Natural killer cell (primary cell): ENCODE measurements at regions of chr19 and their contacts with region 1.

Region 1: GRCh38 chr19:8444645-8445487 is at the start of gene HNRNPM:
- DNase-seq: peak; percentile 99 to 100
- ATAC-seq: peak; percentile 91 to 99 (median 95)
- H3K4me3 ChIP-seq: peak within 1 kb of the TSS; percentile 99
- H3K4me3 Mint-ChIP-seq: peak within 1 kb of the TSS; percentile 97
- H3K27ac ChIP-seq: peak within 1 kb of the TSS; percentile 98
- H3K27ac Mint-ChIP-seq: peak within 1 kb of the TSS; percentile 94 to 100
- H3K4me1 ChIP-seq: peaks cover 36% of the 10 kb centered on the region
- H3K4me1 Mint-ChIP-seq: peaks cover 39 to 45% of the 10 kb centered on the region in 2 donors
- H3K27me3 ChIP-seq: no peaks in the 10 kb centered on the region
- H3K27me3 Mint-ChIP-seq: no peaks in the 10 kb centered on the region
- CTCF ChIP-seq: no peak
- total RNA-seq, gene HNRNPM: 272 to 300 (median 299) TPM

Region 2: DNA sequence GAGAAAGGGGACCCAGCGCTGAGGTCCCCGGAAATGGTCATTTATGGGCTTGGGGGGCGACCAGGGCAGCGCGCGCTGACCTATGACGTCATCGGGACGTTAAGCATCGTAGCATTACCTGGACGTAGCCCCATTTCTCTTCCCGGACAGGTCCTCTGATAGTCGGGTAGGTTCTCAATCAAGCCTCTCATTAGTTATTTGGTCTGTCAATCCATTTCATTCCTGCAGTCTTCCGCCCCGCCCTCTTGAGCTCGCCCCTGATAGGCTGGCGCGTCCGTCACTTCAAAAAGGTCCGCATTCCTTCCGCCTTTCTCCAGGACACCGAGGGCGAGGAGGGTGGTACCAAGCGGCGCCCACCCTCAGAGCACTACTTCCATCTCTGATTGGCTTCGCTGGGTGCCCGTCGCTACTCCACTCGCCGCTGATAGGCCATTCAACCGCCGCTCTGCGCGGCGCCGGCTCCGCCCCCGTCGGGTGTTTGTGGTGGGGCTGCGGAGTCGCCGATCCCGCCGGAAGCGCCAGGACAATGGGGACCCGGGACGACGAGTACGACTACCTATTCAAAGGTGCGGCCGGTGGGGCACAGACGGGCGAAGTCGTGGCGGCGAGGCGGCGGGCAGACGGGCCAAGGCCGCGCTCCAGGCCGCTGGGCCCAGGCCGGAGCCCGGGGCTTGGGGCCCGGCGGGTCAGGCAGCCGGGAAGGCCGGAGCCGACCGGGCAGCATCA is 54.8 kb before region 1 on chr19 and contains the start of gene RAB11B:
- intact Hi-C with region 1: loop called (anchors 1 kb)
- DNase-seq: peak; percentile 95 to 99
- ATAC-seq: peak; percentile 85 to 96 (median 87)
- H3K4me3 ChIP-seq: peak within 1 kb of the TSS; percentile 49
- H3K4me3 Mint-ChIP-seq: peak within 1 kb of the TSS; percentile 98
- H3K27ac ChIP-seq: peak within 1 kb of the TSS; percentile 92
- H3K27ac Mint-ChIP-seq: peak within 1 kb of the TSS; percentile 94
- H3K4me1 ChIP-seq: peaks cover 34% of the 10 kb centered on the region
- H3K4me1 Mint-ChIP-seq: peaks cover 16 to 33% of the 10 kb centered on the region in 2 donors
- H3K27me3 ChIP-seq: no peaks in the 10 kb centered on the region
- H3K27me3 Mint-ChIP-seq: no peaks in the 10 kb centered on the region
- CTCF ChIP-seq: no peak
- total RNA-seq, gene RAB11B: 101 to 116 (median 108) TPM

Region 3: GRCh38 chr19:8505680-8506401 is 61.0 kb after region 1 on chr19:
- intact Hi-C with region 1: loop called (anchors 10 kb)
- DNase-seq: peak; percentile 63 to 79
- ATAC-seq: peak; percentile 57 to 68 (median 65)
- H3K4me3 ChIP-seq: peak overlapping the region; percentile 60
- H3K4me3 Mint-ChIP-seq: peak overlapping the region; percentile 93
- H3K27ac ChIP-seq: no peak overlapping the region
- H3K27ac Mint-ChIP-seq: peak overlapping the region in 1 of 2 donors; percentile 78
- H3K4me1 ChIP-seq: peaks cover 60% of the 10 kb centered on the region
- H3K4me1 Mint-ChIP-seq: peaks cover 10 to 30% of the 10 kb centered on the region in 2 donors
- H3K27me3 ChIP-seq: no peaks in the 10 kb centered on the region
- H3K27me3 Mint-ChIP-seq: no peaks in the 10 kb centered on the region
- CTCF ChIP-seq: peak; percentile 68

Region 4: DNA sequence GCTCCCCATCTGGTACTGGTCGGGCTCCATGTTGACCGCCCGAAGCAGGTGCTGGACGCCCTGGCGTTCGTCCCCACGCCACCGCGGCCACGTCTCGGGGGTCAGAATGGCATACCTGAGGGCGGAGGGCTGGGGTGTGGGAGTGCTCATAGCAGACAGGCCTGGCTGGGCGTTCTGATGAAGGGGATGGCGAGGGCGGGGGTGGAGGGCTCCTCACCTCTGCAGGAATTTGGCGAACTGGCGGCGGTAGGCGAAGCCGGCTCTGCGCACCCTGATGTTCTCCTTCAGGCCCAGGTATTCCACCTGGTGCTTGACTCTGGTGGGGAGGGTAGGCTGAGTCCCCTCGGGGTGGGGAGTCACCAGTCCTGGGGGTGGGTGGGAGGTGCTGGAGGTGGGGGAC is 91.4 kb after region 1 on chr19:
- intact Hi-C with region 1: no loop called
- DNase-seq: no peak
- ATAC-seq: no peak
- H3K4me3 ChIP-seq: no peak overlapping the region
- H3K4me3 Mint-ChIP-seq: no peak overlapping the region
- H3K27ac ChIP-seq: no peak overlapping the region
- H3K27ac Mint-ChIP-seq: peak overlapping the region; percentile 1 to 53
- H3K4me1 ChIP-seq: no peaks in the 10 kb centered on the region
- H3K4me1 Mint-ChIP-seq: peaks cover 0 to 6% of the 10 kb centered on the region in 2 donors
- H3K27me3 ChIP-seq: no peaks in the 10 kb centered on the region
- H3K27me3 Mint-ChIP-seq: no peaks in the 10 kb centered on the region
- CTCF ChIP-seq: no peak